Ovary (tissue), 10 donors: ENCODE measurements at regions of chr1 and their contacts with region 1.

Region 1: GRCh38 chr1:228102791-228103620 is at the start of gene C1orf35:
- DNase-seq: peak; percentile 92 to 98 (median 94)
- H3K4me3 ChIP-seq: peak within 1 kb of the TSS; percentile 89
- H3K27ac ChIP-seq: peak within 1 kb of the TSS; percentile 80 to 86
- H3K4me1 ChIP-seq: peaks cover 2% of the 10 kb centered on the region
- H3K27me3 ChIP-seq: no peaks in the 10 kb centered on the region
- CTCF ChIP-seq: peak in 1 of 3 donors; percentile 26
- EP300 ChIP-seq: no peak
- POLR2A ChIP-seq: peak; percentile 66
- total RNA-seq, gene C1orf35: 16.0 to 24.7 (median 21.0) TPM

Region 2: GRCh38 chr1:228082135-228082891 is 20.7 kb before region 1 on chr1 and contains the start of gene ARF1:
- intact Hi-C with region 1: loop called in 1 of 4 experiments (anchors 1 kb)
- DNase-seq: peak; percentile 89 to 97 (median 95)
- H3K4me3 ChIP-seq: peak within 1 kb of the TSS; percentile 99
- H3K27ac ChIP-seq: peak within 1 kb of the TSS; percentile 97 to 99
- H3K4me1 ChIP-seq: peaks cover 21% of the 10 kb centered on the region
- H3K27me3 ChIP-seq: no peaks in the 10 kb centered on the region
- CTCF ChIP-seq: peak in 1 of 3 donors; percentile 45
- EP300 ChIP-seq: peak; percentile 21
- POLR2A ChIP-seq: peak; percentile 96
- total RNA-seq, gene ARF1: 209 to 345 (median 285) TPM

Region 3: DNA sequence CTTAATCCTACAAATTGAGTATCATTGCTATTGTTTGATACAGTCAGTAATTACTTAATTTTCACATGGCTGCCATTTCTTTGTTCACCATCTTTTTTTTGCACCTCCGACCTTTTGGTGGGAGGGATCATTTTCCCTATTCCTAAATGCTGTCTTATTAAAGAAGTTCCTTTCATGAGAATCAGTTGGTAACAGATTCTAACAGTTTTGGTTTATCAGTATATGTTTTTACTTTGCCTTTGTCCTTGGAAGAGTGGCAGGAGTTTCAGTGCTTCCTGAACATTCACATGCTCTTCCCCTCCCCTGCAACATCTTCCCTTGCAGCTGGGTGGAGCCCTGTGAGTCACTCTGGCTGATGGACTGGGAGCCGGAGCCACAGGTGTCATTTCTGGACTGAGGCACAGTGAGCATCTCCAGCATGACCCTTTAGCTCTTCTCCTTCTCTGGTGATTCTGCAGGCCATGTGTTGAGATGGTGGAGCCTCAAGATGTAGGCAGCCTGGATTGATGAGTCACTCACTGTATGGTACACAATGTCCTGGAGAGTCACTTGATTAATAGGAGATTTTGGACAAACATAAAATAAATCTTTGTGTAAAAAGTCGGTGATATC is 1740.7 kb after region 1 on chr1:
- intact Hi-C with region 1: loop called in 1 of 4 experiments (anchors 5 kb)
- DNase-seq: peak in 4 of 5 donors; percentile 37 to 63 (median 57)
- H3K4me3 ChIP-seq: no peak overlapping the region
- H3K27ac ChIP-seq: no peak overlapping the region
- H3K4me1 ChIP-seq: peaks cover 11% of the 10 kb centered on the region
- H3K27me3 ChIP-seq: no peaks in the 10 kb centered on the region
- CTCF ChIP-seq: no peak
- EP300 ChIP-seq: no peak
- POLR2A ChIP-seq: no peak